Activated CD4-positive, alpha-beta T cell treated with anti-CD3 and anti-CD28 coated beads, Interleukin-2, amount 10 ng/mL, durations not matched to agents 24 days and 14 days (primary cell): ENCODE measurements at regions of chr15 and their contacts with region 1.

Region 1: DNA sequence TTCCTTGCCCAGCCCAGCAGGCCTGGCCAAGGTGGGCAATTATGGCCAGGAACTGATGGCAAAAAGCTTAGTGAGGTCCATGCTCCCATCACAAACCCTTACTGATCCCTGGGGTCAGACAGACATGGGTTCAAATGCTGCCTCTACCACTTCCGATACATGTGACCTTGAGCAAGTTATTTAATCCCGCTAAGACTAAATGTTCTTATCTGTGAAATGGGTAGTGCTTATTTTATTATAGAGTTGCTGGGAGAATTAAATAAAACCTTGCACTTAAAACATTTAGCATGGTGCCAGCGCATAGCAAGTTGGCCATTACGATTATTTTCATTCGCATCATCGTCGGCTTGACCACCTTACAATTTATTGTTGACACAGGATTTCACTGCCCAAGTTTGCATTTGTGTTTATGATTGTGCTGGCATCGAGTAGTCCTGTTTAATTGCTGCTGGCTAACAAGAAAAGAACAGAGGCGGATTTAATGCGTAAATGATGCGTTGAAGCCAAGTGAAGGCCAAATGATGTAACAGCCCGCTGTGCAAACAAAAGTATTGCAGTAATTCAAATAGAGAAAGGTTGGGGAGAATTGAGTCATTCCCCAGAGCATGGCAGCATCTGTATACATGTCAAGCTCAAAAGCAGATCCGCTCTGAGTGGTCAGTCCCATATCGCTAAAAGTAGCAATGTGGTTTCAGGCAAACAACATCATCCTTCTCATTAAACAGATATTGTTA is 7.3 kb upstream of the FURIN start:
- DNase-seq: no peak
- H3K4me3 Mint-ChIP-seq: no peak overlapping the region
- H3K27ac Mint-ChIP-seq: no peak overlapping the region
- H3K4me1 Mint-ChIP-seq: peaks cover 59% of the 10 kb centered on the region
- H3K27me3 Mint-ChIP-seq: no peaks in the 10 kb centered on the region

Region 2: GRCh38 chr15:90400406-90401314 is 460.4 kb before region 1 on chr15:
- intact Hi-C with region 1: loop called (anchors 10 kb)
- DNase-seq: peak; percentile 92
- H3K4me3 Mint-ChIP-seq: peak overlapping the region; percentile 79
- H3K27ac Mint-ChIP-seq: peak overlapping the region; percentile 97
- H3K4me1 Mint-ChIP-seq: peaks cover 50% of the 10 kb centered on the region
- H3K27me3 Mint-ChIP-seq: no peaks in the 10 kb centered on the region

Region 3: DNA sequence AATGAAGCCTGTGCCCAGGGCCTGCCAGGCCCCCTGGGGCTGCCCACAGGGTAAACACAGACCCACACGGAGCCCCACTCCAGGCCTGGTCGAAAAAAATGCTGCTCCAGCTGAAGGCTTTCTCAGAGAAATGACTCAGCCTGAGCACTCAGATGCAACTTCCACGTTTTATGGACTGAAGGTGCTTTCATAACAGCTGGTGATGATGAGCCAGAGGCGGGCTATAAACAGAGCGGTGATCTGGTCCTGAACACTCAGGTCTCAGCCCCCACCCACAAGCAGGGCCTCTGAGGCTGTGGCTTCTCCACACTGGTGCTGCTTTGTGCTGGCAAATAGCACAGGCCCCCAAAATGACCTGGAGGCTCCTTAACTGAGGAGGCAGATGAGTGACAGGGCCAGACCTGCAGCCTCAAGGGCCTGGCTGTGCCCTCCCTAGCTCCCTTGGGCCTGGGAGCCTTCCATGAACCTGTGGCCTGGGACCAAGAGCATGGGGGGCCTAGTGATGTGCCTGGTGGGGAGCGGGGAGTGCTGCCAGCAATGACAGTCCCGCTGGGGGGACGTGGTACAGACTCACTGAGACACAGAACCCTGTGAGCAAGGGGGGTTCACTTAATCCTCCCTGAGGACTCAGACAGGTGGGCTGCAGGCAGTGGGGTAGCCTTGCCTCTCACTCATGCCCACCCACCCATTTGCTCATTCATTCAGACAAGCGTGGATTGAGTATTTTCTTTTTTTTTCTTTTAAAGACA is 15.7 kb before region 1 on chr15:
- intact Hi-C with region 1: no loop called
- DNase-seq: peak; percentile 87
- H3K4me3 Mint-ChIP-seq: peak overlapping the region; percentile 52
- H3K27ac Mint-ChIP-seq: peak overlapping the region; percentile 89
- H3K4me1 Mint-ChIP-seq: peaks cover 42% of the 10 kb centered on the region
- H3K27me3 Mint-ChIP-seq: no peaks in the 10 kb centered on the region